Cardiac septum (tissue), 1 donor: ENCODE measurements at regions of chr6 and their contacts with region 1.

Region 1: DNA sequence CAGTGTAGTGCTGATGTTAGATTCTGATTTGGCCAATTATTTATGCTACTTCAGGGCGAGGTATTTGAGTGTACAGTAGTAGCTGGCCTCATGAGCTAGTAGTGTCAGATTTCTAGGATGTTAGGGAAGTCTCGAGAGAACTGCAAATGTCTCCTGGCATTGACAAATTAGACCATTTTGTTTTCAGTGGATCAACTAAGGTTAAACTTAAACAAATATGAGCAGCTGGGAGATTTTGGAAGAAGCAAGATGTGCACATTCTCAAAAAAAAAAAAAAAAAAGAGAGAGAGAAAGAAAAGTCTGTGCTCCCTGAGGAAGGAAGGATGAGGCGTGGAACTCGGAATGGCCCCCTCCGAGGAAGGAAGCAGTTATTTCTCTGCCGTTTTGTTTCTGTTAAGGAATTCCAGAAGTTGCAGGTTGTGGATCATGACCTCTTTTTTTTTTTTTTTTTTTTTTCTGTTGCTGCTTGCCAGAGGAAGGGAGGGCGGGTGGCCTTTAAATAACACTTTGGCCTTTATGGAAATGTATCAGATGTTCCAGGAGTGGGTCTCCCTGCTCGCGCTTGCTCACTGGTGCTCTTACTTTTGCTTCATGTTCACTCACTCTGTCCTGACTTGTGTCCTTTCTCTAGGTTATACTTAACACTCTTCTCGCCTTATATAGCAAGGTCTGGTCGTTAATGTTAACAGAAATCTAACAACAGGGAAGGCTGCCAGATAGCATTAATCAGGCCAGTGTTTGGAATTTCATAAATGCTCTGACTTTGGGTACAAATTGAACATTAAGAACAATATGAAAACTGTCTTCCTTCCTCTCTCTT is 124.4 kb downstream of the TCP11 start:
- DNase-seq: no peak

Region 2: GRCh38 chr6:35044145-35044745 is 27.5 kb after region 1 on chr6:
- intact Hi-C with region 1: loop called (anchors 2 kb)
- DNase-seq: peak; percentile 47

Region 3: GRCh38 chr6:35057449-35058357 is 41.0 kb after region 1 on chr6:
- intact Hi-C with region 1: loop called (anchors 5 kb)
- DNase-seq: no peak